ENCODE measurements at regions of chr3 and their contacts with region 1.

Region 1: GRCh38 chr3:44198284-44199269 is 43.1 kb upstream of the TOPAZ1 start:
- DNase-seq: peak; percentile 32 to 46 (median 43)
- H3K4me3 ChIP-seq: no peak overlapping the region
- H3K4me3 Mint-ChIP-seq: no peak overlapping the region
- H3K27ac ChIP-seq: no peak overlapping the region
- H3K27ac Mint-ChIP-seq: peak overlapping the region in 1 of 7 donors; percentile 54
- H3K4me1 ChIP-seq: no peaks in the 10 kb centered on the region
- H3K4me1 Mint-ChIP-seq: peaks cover 4% of the 10 kb centered on the region
- H3K27me3 ChIP-seq: no peaks in the 10 kb centered on the region
- H3K27me3 Mint-ChIP-seq: peaks cover 0 to 12% (median 4%) of the 10 kb centered on the region in 3 donors
- CTCF ChIP-seq: peak; percentile 89

Region 2: GRCh38 chr3:43540624-43541023 is 658.0 kb before region 1 on chr3:
- intact Hi-C with region 1: loop called (anchors 10 kb)
- DNase-seq: no peak
- H3K4me3 ChIP-seq: no peak overlapping the region
- H3K4me3 Mint-ChIP-seq: no peak overlapping the region
- H3K27ac ChIP-seq: no peak overlapping the region
- H3K27ac Mint-ChIP-seq: peak overlapping the region in 1 of 7 donors; percentile 77
- H3K4me1 ChIP-seq: no peaks in the 10 kb centered on the region
- H3K4me1 Mint-ChIP-seq: peaks cover 2% of the 10 kb centered on the region
- H3K27me3 ChIP-seq: no peaks in the 10 kb centered on the region
- H3K27me3 Mint-ChIP-seq: peaks cover 0 to 3% (median 0%) of the 10 kb centered on the region in 3 donors
- CTCF ChIP-seq: no peak

Region 3: GRCh38 chr3:43855674-43856299 is 342.8 kb before region 1 on chr3:
- intact Hi-C with region 1: loop called in 1 of 2 experiments (anchors 10 kb)
- DNase-seq: peak; percentile 8 to 23 (median 13)
- H3K4me3 ChIP-seq: no peak overlapping the region
- H3K4me3 Mint-ChIP-seq: no peak overlapping the region
- H3K27ac ChIP-seq: no peak overlapping the region
- H3K27ac Mint-ChIP-seq: peak overlapping the region in 1 of 7 donors; percentile 36
- H3K4me1 ChIP-seq: no peaks in the 10 kb centered on the region
- H3K4me1 Mint-ChIP-seq: peaks cover 4% of the 10 kb centered on the region
- H3K27me3 ChIP-seq: peaks cover 0 to 15% of the 10 kb centered on the region in 2 donors
- H3K27me3 Mint-ChIP-seq: peaks cover 17 to 44% (median 36%) of the 10 kb centered on the region in 3 donors
- CTCF ChIP-seq: peak; percentile 66

Region 4: GRCh38 chr3:44264146-44264545 is 65.6 kb after region 1 on chr3:
- intact Hi-C with region 1: no loop called
- DNase-seq: no peak
- H3K4me3 ChIP-seq: no peak overlapping the region
- H3K4me3 Mint-ChIP-seq: no peak overlapping the region
- H3K27ac ChIP-seq: no peak overlapping the region
- H3K27ac Mint-ChIP-seq: no peak overlapping the region
- H3K4me1 ChIP-seq: no peaks in the 10 kb centered on the region
- H3K4me1 Mint-ChIP-seq: no peaks in the 10 kb centered on the region
- H3K27me3 ChIP-seq: no peaks in the 10 kb centered on the region
- H3K27me3 Mint-ChIP-seq: peaks cover 0 to 1% (median 0%) of the 10 kb centered on the region in 3 donors
- CTCF ChIP-seq: no peak